KBM-7 (cell line): ENCODE measurements at regions of chr9 and their contacts with region 1.

Region 1: DNA sequence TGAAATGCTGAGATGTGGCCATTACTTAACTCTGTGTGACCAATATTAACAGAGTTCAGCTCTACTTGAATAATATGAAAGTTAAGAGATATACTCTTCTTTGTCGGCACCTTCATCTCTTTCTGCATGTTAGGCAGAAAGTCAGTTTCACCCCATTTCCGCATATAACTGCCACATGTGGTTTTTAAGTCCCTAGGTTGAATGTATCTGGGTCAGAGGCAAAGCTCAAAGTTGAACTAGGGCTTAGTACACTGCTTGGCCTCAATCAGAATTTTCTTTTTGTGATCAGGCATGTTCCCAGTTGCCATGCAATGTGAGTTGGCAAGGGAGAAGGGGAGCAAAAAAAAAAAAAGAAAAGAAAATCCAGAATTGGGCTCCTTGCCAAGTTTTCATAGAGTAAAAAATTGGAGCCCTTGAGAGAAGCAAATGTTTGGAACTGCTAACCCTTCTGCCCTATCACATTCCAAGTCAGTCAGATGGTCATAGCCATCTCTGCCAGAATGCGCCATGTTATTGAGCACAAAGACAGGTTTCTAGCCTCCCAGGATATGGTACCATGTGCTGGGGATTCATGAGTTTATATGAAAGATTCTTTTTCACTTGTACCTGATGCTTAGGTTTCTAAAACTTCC is 251.2 kb upstream of the RORB start:
- DNase-seq: peak; percentile 94

Region 2: GRCh38 chr9:74333384-74334032 is 87.5 kb after region 1 on chr9:
- in situ Hi-C with region 1: loop called (anchors 25 kb)
- DNase-seq: peak; percentile 93

Region 3: DNA sequence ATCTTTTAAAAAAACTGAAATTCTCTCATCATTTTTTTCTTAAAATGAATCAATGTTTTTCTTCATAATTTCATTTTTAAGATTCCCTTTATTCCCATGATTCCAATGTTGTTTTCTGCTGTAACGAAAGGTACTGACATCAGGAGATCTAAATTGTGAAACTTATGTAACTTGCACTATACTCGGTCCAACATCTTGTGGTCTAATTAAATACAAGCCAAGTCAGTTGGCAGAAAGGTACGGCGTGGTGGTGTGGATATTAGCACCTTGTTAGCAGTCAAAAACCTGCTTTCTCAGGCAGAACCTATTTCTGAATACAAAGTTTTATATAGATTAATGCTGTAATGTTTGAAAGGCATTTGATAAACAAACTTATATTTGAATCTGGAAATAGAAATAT is 271.2 kb after region 1 on chr9:
- in situ Hi-C with region 1: no loop called
- DNase-seq: no peak